Stomach (tissue), 19 donors: ENCODE measurements at regions of chr7 and their contacts with region 1.

Region 1: GRCh38 chr7:155555116-155555695 is 8.8 kb upstream of the CNPY1 start:
- DNase-seq: no peak
- H3K4me3 ChIP-seq: no peak overlapping the region
- H3K27ac ChIP-seq: no peak overlapping the region
- H3K4me1 ChIP-seq: no peaks in the 10 kb centered on the region
- H3K27me3 ChIP-seq: peaks cover 0 to 49% (median 0%) of the 10 kb centered on the region in 3 donors
- CTCF ChIP-seq: no peak
- EP300 ChIP-seq: no peak
- POLR2A ChIP-seq: no peak

Region 2: GRCh38 chr7:155490697-155491628 is 64.2 kb before region 1 on chr7:
- intact Hi-C with region 1: loop called (anchors 10 kb)
- DNase-seq: peak in 1 of 2 donors; percentile 75
- H3K4me3 ChIP-seq: peak overlapping the region; percentile 37 to 52 (median 44)
- H3K27ac ChIP-seq: peak overlapping the region in 2 of 5 donors; percentile 1 to 41
- H3K4me1 ChIP-seq: peaks cover 14 to 17% (median 16%) of the 10 kb centered on the region in 4 donors
- H3K27me3 ChIP-seq: peaks cover 0 to 90% (median 31%) of the 10 kb centered on the region in 3 donors
- CTCF ChIP-seq: no peak
- EP300 ChIP-seq: no peak
- POLR2A ChIP-seq: no peak